Prostate gland (tissue), 2 donors: ENCODE measurements at regions of chr14 and their contacts with region 1.

Region 1: GRCh38 chr14:70622111-70622712 is 19.5 kb upstream of the TTC9 start:
- DNase-seq: peak; percentile 47
- H3K4me3 ChIP-seq: no peak overlapping the region
- H3K27ac ChIP-seq: no peak overlapping the region
- H3K4me1 ChIP-seq: no peaks in the 10 kb centered on the region
- H3K27me3 ChIP-seq: no peaks in the 10 kb centered on the region
- CTCF ChIP-seq: peak; percentile 30 to 84 (median 76)
- POLR2A ChIP-seq: no peak

Region 2: DNA sequence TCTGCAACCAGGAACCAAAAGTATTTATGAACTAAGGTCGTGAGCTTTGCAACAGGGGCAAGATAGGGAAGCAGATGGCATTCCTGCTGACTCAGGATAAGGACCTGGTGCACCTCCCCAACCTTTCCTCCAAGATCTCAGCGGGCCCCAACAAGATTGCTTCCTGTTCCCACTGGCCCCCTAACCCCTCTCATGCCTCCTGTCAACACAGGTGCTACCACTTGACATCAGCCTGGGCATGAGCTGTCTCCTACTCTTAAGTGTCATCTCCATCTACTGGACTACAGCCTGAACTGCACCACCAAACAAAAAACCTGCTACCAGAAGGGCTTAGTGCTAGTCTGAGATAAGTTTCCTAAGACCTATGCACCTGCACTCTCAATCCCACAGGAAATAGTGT is 54.4 kb before region 1 on chr14:
- intact Hi-C with region 1: no loop called
- DNase-seq: no peak
- H3K4me3 ChIP-seq: no peak overlapping the region
- H3K27ac ChIP-seq: no peak overlapping the region
- H3K4me1 ChIP-seq: no peaks in the 10 kb centered on the region
- H3K27me3 ChIP-seq: no peaks in the 10 kb centered on the region
- CTCF ChIP-seq: peak in 2 of 4 experiments; percentile 16 to 24
- POLR2A ChIP-seq: no peak

Region 3: GRCh38 chr14:70714055-70714621 is 91.9 kb after region 1 on chr14:
- intact Hi-C with region 1: loop called (anchors 10 kb)
- DNase-seq: peak; percentile 46
- H3K4me3 ChIP-seq: no peak overlapping the region
- H3K27ac ChIP-seq: no peak overlapping the region
- H3K4me1 ChIP-seq: no peaks in the 10 kb centered on the region
- H3K27me3 ChIP-seq: no peaks in the 10 kb centered on the region
- CTCF ChIP-seq: peak; percentile 62 to 83 (median 66)
- POLR2A ChIP-seq: no peak